HEK293 (cell line): ENCODE measurements at regions of chr9 and their contacts with region 1.

Region 1: DNA sequence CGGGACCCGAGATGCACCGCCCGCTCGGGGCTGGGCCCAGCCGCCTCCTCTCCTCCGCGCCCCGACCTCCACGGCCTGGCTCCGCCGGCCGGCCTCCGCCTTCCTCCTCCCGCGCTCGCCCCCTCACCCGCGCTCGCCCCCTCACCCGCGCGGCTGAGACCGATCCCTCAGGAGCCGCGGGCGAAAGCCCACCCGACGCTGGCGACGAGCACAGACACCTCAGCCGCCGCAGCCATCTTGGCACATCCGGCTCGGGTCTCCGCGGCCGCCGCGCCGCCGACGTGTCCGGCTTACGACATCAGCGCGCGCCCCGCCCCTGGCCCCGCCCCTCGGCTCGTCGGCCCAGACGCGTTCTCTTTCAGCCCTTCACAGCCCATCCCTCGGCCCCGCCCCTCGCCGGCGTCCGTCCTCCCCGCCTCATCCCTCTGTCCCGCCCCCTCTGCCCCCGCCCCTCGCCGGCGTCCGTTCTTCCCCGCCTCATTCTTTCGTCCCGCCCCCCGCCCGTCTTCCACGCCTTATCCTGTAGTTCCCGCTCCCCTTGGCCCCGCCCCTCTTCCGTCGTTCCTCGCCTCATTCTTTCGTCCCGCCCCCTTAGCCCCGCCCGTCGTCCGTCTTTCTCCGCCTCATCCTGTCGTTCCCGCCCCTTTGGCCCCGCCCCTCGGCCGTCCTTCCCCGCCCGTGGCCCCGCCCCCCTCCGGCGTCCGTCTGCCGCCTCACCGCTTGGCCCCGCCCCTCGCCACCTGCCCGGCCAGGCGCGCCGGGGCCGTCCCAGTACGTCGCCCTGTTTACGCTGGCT is at the start of gene SEC16A:
- H3K4me3 ChIP-seq: peak within 1 kb of the TSS; percentile 82
- H3K27ac ChIP-seq: peak within 1 kb of the TSS; percentile 94
- H3K4me1 ChIP-seq: no peaks in the 10 kb centered on the region; the same call in 1 of the 2 replicates
- CTCF ChIP-seq: no peak

Region 2: GRCh38 chr9:136031741-136032730 is 451.0 kb before region 1 on chr9:
- CTCF ChIA-PET with region 1: no interaction called
- POLR2A ChIA-PET with region 1: no interaction called
- H3K4me3 ChIP-seq: no peak overlapping the region
- H3K27ac ChIP-seq: no peak overlapping the region
- H3K4me1 ChIP-seq: no peaks in the 10 kb centered on the region
- CTCF ChIP-seq: no peak

Region 3: DNA sequence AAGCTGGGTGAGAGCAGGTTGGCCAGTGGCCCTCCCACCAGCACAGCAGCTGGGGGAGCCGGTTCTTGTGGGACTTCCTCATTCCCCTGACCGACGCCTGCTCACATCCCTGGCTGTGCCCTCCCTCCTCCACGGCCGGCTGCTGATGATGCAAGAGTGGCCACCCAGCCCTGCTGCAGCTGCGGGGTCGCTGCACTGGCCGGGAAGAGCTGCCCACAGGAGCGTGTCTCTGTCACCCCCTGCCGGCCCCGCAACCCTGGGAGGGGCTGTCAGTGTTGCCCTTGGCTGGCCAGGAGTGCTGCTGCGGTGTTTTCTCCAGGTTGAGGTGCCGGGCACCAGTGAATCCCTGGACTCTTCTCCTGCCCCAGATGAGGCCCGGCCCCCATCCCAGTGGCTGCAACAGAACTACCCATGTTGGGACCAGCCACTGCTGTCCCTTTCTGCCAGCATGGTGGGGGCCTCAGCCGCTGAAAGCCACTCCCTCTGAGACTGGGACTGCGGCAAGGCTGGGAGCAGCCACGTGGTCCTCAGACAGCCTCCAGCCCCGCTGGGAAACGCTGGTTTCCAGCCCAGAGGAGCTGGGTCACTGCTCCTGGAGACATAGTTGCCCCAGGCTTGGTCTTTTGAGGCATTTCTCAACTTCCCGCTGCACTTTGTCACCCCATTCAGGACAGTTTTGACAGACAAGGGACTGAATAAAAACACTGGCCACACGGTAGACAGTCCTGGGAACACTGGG is 110.3 kb before region 1 on chr9:
- CTCF ChIA-PET with region 1: no interaction called
- POLR2A ChIA-PET with region 1: no interaction called
- H3K4me3 ChIP-seq: no peak overlapping the region
- H3K27ac ChIP-seq: no peak overlapping the region
- H3K4me1 ChIP-seq: no peaks in the 10 kb centered on the region
- CTCF ChIP-seq: no peak

Region 4: GRCh38 chr9:136429683-136430590 is 53.1 kb before region 1 on chr9:
- CTCF ChIA-PET with region 1: no interaction called
- POLR2A ChIA-PET with region 1: no interaction called
- H3K4me3 ChIP-seq: no peak overlapping the region
- H3K27ac ChIP-seq: no peak overlapping the region
- H3K4me1 ChIP-seq: no peaks in the 10 kb centered on the region
- CTCF ChIP-seq: no peak

Region 5: DNA sequence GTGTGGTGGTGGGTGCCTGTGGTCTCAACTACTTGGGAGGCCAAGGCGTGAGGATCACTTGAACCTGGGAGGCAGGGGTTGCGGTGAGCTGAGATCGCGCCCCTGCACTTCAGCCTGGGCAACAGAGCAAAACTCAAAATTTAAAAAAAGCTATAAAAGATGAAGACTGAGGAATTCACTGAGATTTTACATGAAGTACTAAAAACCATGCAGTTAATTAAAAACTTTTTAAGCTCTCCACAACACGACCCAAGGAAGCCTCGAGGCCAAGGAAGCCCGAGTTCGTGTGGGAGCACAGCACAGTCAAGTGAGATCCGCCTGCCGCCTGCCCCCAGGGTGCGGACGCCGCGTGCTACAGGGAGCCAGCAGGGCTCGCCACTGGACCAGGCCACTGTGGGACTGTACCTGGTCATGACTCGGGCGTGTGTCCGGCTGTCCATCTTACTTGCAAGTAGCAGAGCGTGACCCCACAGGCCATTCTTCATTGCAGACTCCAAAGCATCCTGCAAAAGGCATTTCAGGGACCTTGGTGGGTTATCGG is 22.1 kb before region 1 on chr9:
- CTCF ChIA-PET with region 1: no interaction called
- POLR2A ChIA-PET with region 1: no interaction called
- H3K4me3 ChIP-seq: no peak overlapping the region
- H3K27ac ChIP-seq: no peak overlapping the region
- H3K4me1 ChIP-seq: no peaks in the 10 kb centered on the region
- CTCF ChIP-seq: no peak

Region 6: DNA sequence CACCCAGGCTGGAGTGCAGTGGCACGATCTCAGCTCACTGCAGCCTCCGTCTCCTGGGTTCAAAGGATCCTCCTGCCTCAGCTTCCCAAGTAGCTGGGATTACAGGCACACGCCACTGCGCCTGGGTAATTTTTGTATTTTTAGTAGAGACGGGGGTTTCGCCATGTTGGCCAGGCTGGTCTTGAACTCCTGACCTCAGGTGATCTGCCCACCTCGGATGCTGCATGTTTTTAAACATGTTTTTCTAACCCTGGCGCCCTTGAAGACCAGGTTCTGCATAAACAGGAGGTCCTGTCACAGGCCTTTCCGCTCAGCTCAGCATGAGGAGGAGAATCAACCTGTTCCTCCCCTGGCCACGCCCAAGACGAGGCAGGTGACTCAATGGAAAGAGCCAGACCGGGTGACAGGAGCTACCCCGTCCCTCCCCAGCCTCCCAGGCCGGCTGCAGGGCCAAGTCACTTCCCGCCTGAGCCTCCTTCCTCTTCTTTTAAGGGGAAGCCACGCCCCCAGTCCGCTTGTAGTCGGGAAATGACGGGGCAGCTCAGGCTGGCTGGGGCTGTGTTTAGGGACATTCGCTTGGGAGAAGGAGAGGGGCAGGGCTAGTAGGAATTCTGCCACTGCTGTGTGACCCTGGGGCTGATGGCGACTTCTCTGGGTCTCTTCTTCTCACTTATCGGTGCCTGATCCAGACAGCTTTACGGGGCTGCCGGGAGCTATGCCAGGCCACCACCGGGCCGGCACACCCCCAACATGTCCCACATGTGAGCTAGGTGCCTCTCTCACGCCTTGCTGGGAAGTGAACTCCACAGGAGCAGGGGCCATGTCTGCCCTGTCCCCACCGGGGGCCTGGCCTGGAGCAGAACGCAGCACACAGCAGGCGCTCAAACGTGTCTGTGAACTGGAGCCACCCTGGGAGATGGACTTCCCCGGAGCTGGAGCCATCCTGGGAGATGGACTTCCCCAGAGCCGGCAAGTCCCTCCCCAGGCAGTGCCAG is 56.7 kb after region 1 on chr9:
- CTCF ChIA-PET with region 1: interaction called, 15 read pairs
- POLR2A ChIA-PET with region 1: interaction called, 4 read pairs
- H3K4me3 ChIP-seq: no peak overlapping the region
- H3K27ac ChIP-seq: no peak overlapping the region
- H3K4me1 ChIP-seq: no peaks in the 10 kb centered on the region; the same call in 1 of the 2 replicates
- CTCF ChIP-seq: no peak

Region 7: GRCh38 chr9:136631038-136632000 is 148.3 kb after region 1 on chr9:
- CTCF ChIA-PET with region 1: interaction called, 360 read pairs
- POLR2A ChIA-PET with region 1: interaction called, 7 read pairs
- H3K4me3 ChIP-seq: no peak overlapping the region
- H3K27ac ChIP-seq: no peak overlapping the region
- H3K4me1 ChIP-seq: no peaks in the 10 kb centered on the region; the same call in 1 of the 2 replicates
- CTCF ChIP-seq: peak; percentile 99

Region 8: DNA sequence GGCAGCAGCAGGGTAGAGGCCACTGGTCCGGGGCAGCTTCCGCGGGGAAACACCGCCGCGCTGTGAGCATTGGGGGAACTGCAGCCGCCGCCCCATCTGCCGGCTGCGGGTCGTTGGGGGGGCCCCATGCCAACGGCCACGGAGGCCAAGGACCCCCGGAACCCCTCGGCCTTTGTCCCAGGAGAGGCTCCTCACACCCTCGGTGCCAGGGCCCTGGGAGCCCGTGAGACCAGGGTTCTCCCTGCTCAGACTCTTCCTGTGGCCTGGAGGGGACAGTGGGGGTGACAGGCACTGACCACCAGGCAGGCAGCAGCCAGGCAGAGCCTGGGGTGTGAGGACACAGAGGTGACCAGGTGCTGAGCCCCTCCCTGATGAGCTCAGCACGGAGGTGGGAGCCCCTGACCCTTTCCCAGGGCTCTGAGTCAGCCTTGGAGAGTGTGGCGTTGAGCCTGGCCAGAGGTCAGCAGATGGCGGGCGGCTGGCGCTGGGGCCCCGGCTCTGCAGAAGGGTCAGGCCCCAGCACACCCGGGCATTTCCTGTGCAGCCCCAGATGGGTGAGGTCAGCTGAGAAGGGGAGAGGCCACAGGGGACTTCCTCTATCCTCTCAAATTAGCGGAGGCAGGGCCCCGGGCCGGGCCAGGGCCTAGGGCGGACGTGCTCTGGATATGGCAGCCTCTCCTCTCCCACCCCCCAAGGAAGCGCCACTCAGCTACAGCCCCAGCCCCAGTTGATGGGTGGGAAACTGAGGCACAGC is 161.8 kb after region 1 on chr9:
- CTCF ChIA-PET with region 1: interaction called, 37 read pairs
- POLR2A ChIA-PET with region 1: interaction called, 3 read pairs
- H3K4me3 ChIP-seq: no peak overlapping the region
- H3K27ac ChIP-seq: no peak overlapping the region
- H3K4me1 ChIP-seq: no peaks in the 10 kb centered on the region
- CTCF ChIP-seq: peak; percentile 91